Right cardiac atrium (tissue), 5 donors: ENCODE measurements at regions of chr10 and their contacts with region 1.

Region 1: DNA sequence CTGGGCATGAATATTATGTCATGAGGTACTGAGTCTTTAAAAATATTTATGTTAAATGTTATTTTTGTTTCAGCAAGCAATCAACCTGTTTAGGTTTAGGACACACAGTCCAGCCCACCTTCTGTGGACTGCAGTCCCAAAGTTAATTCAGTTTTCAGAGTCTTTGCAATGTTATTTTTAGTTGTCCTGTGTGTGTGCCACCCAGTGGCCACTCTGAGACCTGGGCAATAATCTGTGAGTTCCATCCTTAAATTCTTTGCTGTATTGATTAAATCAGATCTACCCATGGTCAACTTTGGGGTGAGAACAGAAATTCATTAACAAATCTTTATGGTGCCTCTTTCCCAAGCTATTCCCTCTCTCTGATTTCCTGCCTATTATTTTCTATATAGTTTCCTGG is 415.1 kb downstream of the CCSER2 start:
- DNase-seq: no peak
- ATAC-seq: no peak
- H3K4me3 ChIP-seq: no peak overlapping the region
- H3K27ac ChIP-seq: no peak overlapping the region
- H3K4me1 ChIP-seq: no peaks in the 10 kb centered on the region
- H3K27me3 ChIP-seq: no peaks in the 10 kb centered on the region

Region 2: DNA sequence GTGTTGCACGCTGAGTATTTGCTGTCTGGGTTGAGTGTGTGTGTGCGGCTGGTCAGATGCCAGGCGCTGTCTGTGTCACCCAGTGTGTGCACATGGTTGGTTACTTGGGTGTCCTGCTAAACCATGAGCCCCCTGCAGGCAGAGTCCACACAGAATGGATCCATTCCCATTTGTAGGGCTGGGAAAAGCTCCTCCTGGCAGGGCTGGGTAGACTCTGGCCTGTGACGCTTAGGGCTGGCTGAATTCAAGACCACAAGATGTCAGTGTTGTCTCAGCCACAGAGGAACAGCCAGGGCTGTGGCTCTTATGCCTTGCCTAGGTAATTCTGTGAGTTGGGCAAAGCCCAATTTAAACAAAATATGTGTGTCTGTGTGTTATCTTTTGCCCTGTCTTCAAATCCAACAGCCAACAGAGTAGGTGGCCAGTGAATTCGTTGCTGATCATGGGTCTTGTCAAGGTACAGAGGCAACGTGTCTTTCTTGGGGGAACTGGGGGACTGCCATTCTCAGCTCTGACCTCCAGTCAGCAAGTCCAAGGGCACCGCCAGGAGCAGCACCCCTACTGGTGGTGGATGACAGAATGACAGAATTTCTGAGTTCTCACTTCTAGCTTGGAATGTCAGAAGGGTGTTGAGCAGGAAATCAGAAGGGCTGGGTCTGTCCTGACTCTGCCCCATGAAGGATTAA is 130.0 kb before region 1 on chr10:
- intact Hi-C with region 1: loop called in 2 of 4 experiments (anchors 5 to 10 kb)
- DNase-seq: no peak
- ATAC-seq: peak; percentile 84 to 88
- H3K4me3 ChIP-seq: no peak overlapping the region
- H3K27ac ChIP-seq: no peak overlapping the region
- H3K4me1 ChIP-seq: no peaks in the 10 kb centered on the region
- H3K27me3 ChIP-seq: no peaks in the 10 kb centered on the region